Transverse colon (tissue), 4 donors: ENCODE measurements at regions of chr20 and their contacts with region 1.

Region 1: GRCh38 chr20:2065099-2065498 is 36.5 kb upstream of the STK35 start:
- DNase-seq: no peak
- H3K4me3 ChIP-seq: no peak overlapping the region
- H3K27ac ChIP-seq: no peak overlapping the region
- H3K4me1 ChIP-seq: no peaks in the 10 kb centered on the region
- H3K27me3 ChIP-seq: peaks cover 50% of the 10 kb centered on the region
- CTCF ChIP-seq: no peak
- EP300 ChIP-seq: no peak
- POLR2A ChIP-seq: no peak

Region 2: GRCh38 chr20:1860446-1860845 is 204.7 kb before region 1 on chr20:
- in situ Hi-C with region 1: no loop called
- intact Hi-C with region 1: no loop called
- DNase-seq: no peak
- H3K4me3 ChIP-seq: no peak overlapping the region
- H3K27ac ChIP-seq: no peak overlapping the region
- H3K4me1 ChIP-seq: peaks cover 0 to 8% (median 0%) of the 10 kb centered on the region in 4 donors
- H3K27me3 ChIP-seq: no peaks in the 10 kb centered on the region
- CTCF ChIP-seq: no peak
- EP300 ChIP-seq: no peak
- POLR2A ChIP-seq: no peak

Region 3: GRCh38 chr20:2032155-2032554 is 32.9 kb before region 1 on chr20:
- in situ Hi-C with region 1: no loop called
- intact Hi-C with region 1: loop called (anchors 2 kb)
- DNase-seq: no peak
- H3K4me3 ChIP-seq: no peak overlapping the region
- H3K27ac ChIP-seq: no peak overlapping the region
- H3K4me1 ChIP-seq: no peaks in the 10 kb centered on the region
- H3K27me3 ChIP-seq: peaks cover 29% of the 10 kb centered on the region
- CTCF ChIP-seq: no peak
- EP300 ChIP-seq: no peak
- POLR2A ChIP-seq: no peak

Region 4: DNA sequence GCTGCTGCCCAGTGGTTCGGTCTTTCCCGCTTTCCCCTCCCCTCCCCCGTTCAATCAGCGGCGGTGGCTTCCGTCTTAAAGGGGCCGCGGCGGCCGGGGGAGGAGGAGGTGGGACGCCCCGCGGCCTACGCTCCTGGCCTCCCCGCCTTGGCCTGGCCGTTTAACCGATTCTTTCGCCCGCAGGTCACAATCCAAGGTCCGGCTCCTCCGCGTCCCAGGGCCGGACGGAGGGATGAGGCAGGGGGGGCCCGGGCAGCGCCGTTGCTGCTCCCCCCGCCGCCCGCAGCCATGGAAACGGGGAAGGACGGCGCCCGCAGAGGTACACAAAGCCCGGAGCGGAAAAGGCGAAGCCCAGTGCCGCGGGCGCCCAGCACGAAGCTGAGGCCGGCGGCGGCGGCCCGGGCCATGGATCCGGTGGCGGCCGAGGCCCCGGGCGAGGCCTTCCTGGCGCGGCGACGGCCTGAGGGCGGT is 37.5 kb after region 1 on chr20:
- in situ Hi-C with region 1: no loop called
- intact Hi-C with region 1: no loop called
- DNase-seq: peak; percentile 87
- H3K4me3 ChIP-seq: peak overlapping the region; percentile 45 to 89 (median 69)
- H3K27ac ChIP-seq: peak overlapping the region; percentile 95 to 98 (median 97)
- H3K4me1 ChIP-seq: peaks cover 16 to 37% (median 21%) of the 10 kb centered on the region in 4 donors
- H3K27me3 ChIP-seq: no peaks in the 10 kb centered on the region
- CTCF ChIP-seq: peak in 2 of 5 experiments; percentile 5 to 29
- EP300 ChIP-seq: no peak
- POLR2A ChIP-seq: peak; percentile 91

Region 5: DNA sequence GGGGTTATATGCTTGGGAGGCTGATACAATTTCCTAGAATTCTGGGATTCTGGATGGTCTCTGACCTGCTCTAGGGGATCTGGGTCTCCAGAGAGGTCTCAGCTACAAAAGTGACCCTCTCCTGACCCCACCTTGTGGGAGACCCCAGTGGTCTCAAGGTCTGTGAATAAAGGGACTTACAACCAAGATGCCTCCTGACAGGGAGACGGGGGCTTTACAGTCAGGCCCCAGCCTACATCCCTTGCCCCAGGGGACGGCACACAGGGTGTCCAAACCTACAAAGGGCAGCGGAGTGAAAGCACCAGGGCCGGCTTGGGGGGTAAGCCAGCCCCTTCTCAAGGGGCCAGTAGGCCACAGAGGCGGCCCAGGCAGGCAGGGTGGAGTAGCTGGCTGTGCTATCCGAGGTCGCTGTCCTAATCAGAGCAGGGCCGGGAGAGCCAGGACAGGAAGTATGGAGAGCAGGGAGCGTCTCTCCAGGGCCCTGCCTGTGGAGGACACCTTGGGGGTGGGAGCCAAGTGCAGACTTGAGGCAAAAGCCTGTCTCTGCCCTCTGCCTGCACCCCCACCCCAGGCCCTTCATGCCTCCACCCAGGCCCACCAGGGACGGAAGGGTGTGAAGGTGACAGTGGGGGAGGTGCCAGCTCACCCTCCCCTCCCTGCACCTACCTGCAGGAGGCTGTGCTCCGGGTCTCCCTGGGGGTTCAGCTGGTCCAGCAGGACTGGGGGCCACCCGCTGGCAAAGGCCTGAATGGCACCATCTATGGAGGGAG is 1594.6 kb after region 1 on chr20:
- in situ Hi-C with region 1: no loop called
- intact Hi-C with region 1: no loop called
- DNase-seq: no peak
- H3K4me3 ChIP-seq: no peak overlapping the region
- H3K27ac ChIP-seq: no peak overlapping the region
- H3K4me1 ChIP-seq: peaks cover 0 to 6% (median 2%) of the 10 kb centered on the region in 4 donors
- H3K27me3 ChIP-seq: peaks cover 53% of the 10 kb centered on the region
- CTCF ChIP-seq: no peak
- EP300 ChIP-seq: no peak
- POLR2A ChIP-seq: no peak